HCT116 (cell line): ENCODE measurements at regions of chr20 and their contacts with region 1.

Region 1: DNA sequence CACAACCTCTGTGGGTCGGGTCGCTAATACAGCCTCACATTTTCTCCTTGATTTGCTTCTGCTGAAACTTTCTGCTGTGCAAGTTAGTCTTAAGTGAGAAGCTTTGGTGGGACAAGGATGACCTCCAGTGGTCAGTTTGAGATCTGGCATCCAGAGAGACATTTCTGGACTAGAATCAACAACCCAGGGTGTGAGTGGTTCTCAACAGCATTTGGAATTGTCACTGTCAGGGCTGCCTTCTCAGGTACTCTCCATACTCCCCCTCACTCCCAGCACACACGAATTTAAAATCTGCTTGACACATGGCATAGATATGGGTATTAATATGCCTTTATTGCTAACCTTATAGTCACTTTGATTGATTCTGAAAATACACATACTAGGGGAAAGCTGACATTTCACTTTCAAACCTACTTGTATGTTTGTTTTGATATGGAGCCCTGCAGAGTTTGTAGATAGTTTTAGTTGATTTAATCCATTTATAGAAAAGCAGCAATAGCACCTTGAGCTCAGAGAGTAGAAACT is 13.2 kb downstream of the OTOR start:
- DNase-seq: peak; percentile 74
- ATAC-seq: peak; percentile 89
- H3K4me3 ChIP-seq: no peak overlapping the region
- H3K27ac ChIP-seq: no peak overlapping the region
- H3K4me1 ChIP-seq: 0 out of 4 replicates have a peak, but pooled peaks cover 0 to 6% of the 10 kb centered on the region in 2 experiments
- H3K27me3 ChIP-seq: peaks cover 33% of the 10 kb centered on the region
- CTCF ChIP-seq: peak; percentile 55 to 82 (median 64); a peak in 5 of 6 replicates
- POLR2A ChIP-seq: no peak
- RAD21 ChIP-seq: peak; percentile 85

Region 2: GRCh38 chr20:16517946-16518783 is 243.2 kb before region 1 on chr20:
- CTCF ChIA-PET with region 1: interaction called, 3 read pairs
- POLR2A ChIA-PET with region 1: no interaction called
- RAD21 ChIA-PET with region 1: no interaction called
- intact Hi-C with region 1: loop called (anchors 1 kb)
- DNase-seq: peak; percentile 44
- ATAC-seq: peak; percentile 92
- H3K4me3 ChIP-seq: no peak overlapping the region
- H3K27ac ChIP-seq: no peak overlapping the region
- H3K4me1 ChIP-seq: peaks cover 0 to 4% of the 10 kb centered on the region in 2 experiments; a peak in 1 of 4 replicates
- H3K27me3 ChIP-seq: no peaks in the 10 kb centered on the region
- CTCF ChIP-seq: peak; percentile 58 to 78 (median 72); a peak in 5 of 6 replicates
- POLR2A ChIP-seq: no peak
- RAD21 ChIP-seq: peak; percentile 83

Region 3: GRCh38 chr20:16701296-16701695 is 60.1 kb before region 1 on chr20:
- CTCF ChIA-PET with region 1: interaction called, 4 read pairs
- POLR2A ChIA-PET with region 1: no interaction called
- RAD21 ChIA-PET with region 1: no interaction called
- intact Hi-C with region 1: loop called (anchors 2 kb)
- DNase-seq: peak; percentile 2
- ATAC-seq: peak; percentile 75
- H3K4me3 ChIP-seq: no peak overlapping the region
- H3K27ac ChIP-seq: no peak overlapping the region
- H3K4me1 ChIP-seq: no peaks in the 10 kb centered on the region
- H3K27me3 ChIP-seq: peaks cover 13% of the 10 kb centered on the region; the same call in 1 of the 2 replicates
- CTCF ChIP-seq: peak; percentile 6 to 50 (median 49); a peak in 5 of 6 replicates
- POLR2A ChIP-seq: no peak
- RAD21 ChIP-seq: peak; percentile 31